Cardiac septum (tissue), 1 donor: ENCODE measurements at regions of chr1 and their contacts with region 1.

Region 1: GRCh38 chr1:114716304-114717170 is at the start of gene NRAS:
- DNase-seq: peak; percentile 97
- total RNA-seq, gene NRAS: 11.2 TPM

Region 2: GRCh38 chr1:114053604-114054003 is 662.9 kb before region 1 on chr1:
- intact Hi-C with region 1: no loop called
- DNase-seq: no peak

Region 3: GRCh38 chr1:114581335-114582287 is 134.9 kb before region 1 on chr1 and contains the start of gene BCAS2:
- intact Hi-C with region 1: loop called (anchors 1 kb)
- DNase-seq: peak; percentile 97
- total RNA-seq, gene BCAS2: 36.1 TPM

Region 4: GRCh38 chr1:114670083-114671010 is 46.2 kb before region 1 on chr1:
- intact Hi-C with region 1: loop called (anchors 2 kb)
- DNase-seq: peak; percentile 97

Region 5: GRCh38 chr1:114757455-114758250 is 41.1 kb after region 1 on chr1 and contains the start of gene CSDE1:
- intact Hi-C with region 1: loop called (anchors 2 kb)
- DNase-seq: peak; percentile 98
- total RNA-seq, gene CSDE1: 900 TPM

Region 6: GRCh38 chr1:114780344-114781226 is 64.0 kb after region 1 on chr1 and contains the start of gene SIKE1:
- intact Hi-C with region 1: loop called (anchors 1 kb)
- DNase-seq: peak; percentile 96
- total RNA-seq, gene SIKE1: 40.2 TPM